CD4-positive, alpha-beta memory T cell (primary cell): ENCODE measurements at regions of chr1 and their contacts with region 1.

Region 1: DNA sequence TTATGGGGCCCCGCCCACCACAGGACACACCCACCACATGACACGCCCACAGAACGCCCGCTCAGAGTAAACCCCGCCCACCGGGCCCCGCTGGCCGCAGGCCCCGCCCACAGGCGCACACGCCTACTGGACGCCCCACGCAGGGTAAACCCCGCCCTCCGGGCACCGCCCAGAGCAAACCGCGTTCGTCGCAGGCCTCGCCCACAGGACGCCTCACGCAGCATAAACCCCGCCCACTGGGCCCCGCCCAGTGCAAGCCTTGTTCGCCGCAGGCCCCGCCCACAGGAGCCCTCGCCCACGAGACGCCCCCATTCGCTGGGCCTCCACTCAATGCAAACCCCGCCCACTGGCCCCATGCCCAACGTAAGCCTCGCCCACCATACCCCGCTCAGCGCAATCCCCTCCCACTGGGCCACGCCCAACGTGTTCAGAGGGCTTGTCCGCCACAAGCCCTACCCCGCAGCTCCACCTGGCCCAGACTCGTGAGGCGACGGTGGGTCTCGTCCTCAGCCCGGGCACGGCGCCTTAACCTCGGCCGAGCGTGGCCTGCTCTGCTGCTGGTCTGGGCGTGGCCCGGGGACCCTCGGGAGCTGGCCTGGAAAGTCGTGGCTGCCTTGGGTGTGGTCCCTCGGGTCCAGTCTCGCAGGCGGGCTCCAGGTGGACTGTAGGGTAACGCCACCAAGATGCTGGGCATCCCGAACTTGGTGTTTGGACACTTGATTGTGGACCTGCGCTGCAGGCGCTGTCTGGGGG is 401 bp upstream of the TMEM52 start:
- DNase-seq: peak; percentile 99 to 100 (median 100)
- H3K4me3 ChIP-seq: peak overlapping the region in 1 of 2 donors; percentile 68
- H3K4me3 Mint-ChIP-seq: peak overlapping the region; percentile 24 to 81 (median 68)
- H3K27ac ChIP-seq: peak overlapping the region; percentile 36
- H3K27ac Mint-ChIP-seq: peak overlapping the region; percentile 78 to 96 (median 88)
- H3K4me1 ChIP-seq: peaks cover 17% of the 10 kb centered on the region
- H3K4me1 Mint-ChIP-seq: peaks cover 1 to 15% (median 6%) of the 10 kb centered on the region in 4 donors
- H3K27me3 ChIP-seq: no peaks in the 10 kb centered on the region
- H3K27me3 Mint-ChIP-seq: peaks cover 0 to 1% of the 10 kb centered on the region in 2 donors

Region 2: GRCh38 chr1:1788646-1789431 is 130.6 kb before region 1 on chr1:
- CTCF ChIA-PET with region 1: no interaction called
- POLR2A ChIA-PET with region 1: no interaction called
- intact Hi-C with region 1: no loop called
- DNase-seq: no peak
- H3K4me3 ChIP-seq: no peak overlapping the region
- H3K4me3 Mint-ChIP-seq: no peak overlapping the region
- H3K27ac ChIP-seq: no peak overlapping the region
- H3K27ac Mint-ChIP-seq: peak overlapping the region in 3 of 7 donors; percentile 22 to 86 (median 65)
- H3K4me1 ChIP-seq: no peaks in the 10 kb centered on the region
- H3K4me1 Mint-ChIP-seq: peaks cover 3 to 16% (median 7%) of the 10 kb centered on the region in 4 donors
- H3K27me3 ChIP-seq: no peaks in the 10 kb centered on the region
- H3K27me3 Mint-ChIP-seq: no peaks in the 10 kb centered on the region

Region 3: GRCh38 chr1:2127187-2128145 is 208.0 kb after region 1 on chr1:
- CTCF ChIA-PET with region 1: no interaction called
- POLR2A ChIA-PET with region 1: no interaction called
- intact Hi-C with region 1: no loop called
- DNase-seq: no peak
- H3K4me3 ChIP-seq: no peak overlapping the region
- H3K4me3 Mint-ChIP-seq: peak overlapping the region in 6 of 8 donors; percentile 65 to 92 (median 86)
- H3K27ac ChIP-seq: no peak overlapping the region
- H3K27ac Mint-ChIP-seq: peak overlapping the region in 6 of 7 donors; percentile 24 to 88 (median 70)
- H3K4me1 ChIP-seq: peaks cover 22% of the 10 kb centered on the region
- H3K4me1 Mint-ChIP-seq: peaks cover 7 to 46% (median 15%) of the 10 kb centered on the region in 4 donors
- H3K27me3 ChIP-seq: no peaks in the 10 kb centered on the region
- H3K27me3 Mint-ChIP-seq: no peaks in the 10 kb centered on the region

Region 4: DNA sequence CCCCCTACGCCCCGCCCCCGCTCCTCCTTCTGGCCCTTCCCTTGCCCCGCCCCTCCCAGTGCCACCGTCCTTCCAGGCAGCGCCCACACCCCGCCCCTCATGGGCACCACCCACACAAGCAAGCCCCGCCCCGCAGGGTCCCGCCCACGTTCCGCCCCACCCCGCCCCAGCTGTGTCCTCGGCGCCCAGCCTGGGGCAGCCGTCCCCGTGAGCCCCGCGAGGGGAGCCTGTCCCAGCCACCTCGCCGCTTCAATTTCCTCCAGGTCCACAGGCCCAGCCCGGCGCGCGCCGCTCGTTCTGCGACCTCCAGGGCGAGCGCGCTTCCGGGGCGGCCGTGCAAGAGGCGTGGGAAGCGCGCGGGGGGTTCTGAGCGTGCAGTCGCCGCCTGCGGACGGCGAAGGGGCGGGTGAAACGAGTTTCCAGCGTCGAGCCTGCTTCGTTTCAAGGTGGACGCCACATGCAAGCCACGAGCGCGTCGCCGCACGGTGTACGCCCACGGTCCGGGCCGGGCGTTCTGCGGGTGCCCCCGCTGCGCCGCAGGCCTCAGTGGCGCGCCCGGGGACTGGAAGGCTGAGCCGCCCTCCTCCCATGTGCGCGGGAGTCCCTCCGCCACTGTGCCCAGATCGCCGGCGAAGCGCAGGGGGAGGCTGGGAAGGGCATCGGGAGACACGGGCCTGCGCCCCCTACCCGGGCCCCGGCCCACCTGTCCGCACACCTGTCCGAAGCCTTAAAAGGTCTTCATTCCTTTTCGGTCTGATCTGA is 285.9 kb after region 1 on chr1:
- CTCF ChIA-PET with region 1: no interaction called
- POLR2A ChIA-PET with region 1: no interaction called
- intact Hi-C with region 1: loop called (anchors 1 kb)
- DNase-seq: peak; percentile 90 to 95 (median 91)
- H3K4me3 ChIP-seq: peak overlapping the region; percentile 6 to 47
- H3K4me3 Mint-ChIP-seq: peak overlapping the region; percentile 48 to 71 (median 68)
- H3K27ac ChIP-seq: peak overlapping the region; percentile 38
- H3K27ac Mint-ChIP-seq: peak overlapping the region in 3 of 7 donors; percentile 35 to 79 (median 62)
- H3K4me1 ChIP-seq: peaks cover 26% of the 10 kb centered on the region
- H3K4me1 Mint-ChIP-seq: peaks cover 0 to 15% (median 3%) of the 10 kb centered on the region in 4 donors
- H3K27me3 ChIP-seq: no peaks in the 10 kb centered on the region
- H3K27me3 Mint-ChIP-seq: no peaks in the 10 kb centered on the region

Region 5: GRCh38 chr1:2242814-2243725 is 323.6 kb after region 1 on chr1:
- CTCF ChIA-PET with region 1: no interaction called
- POLR2A ChIA-PET with region 1: no interaction called
- intact Hi-C with region 1: no loop called
- DNase-seq: peak in 1 of 5 donors; percentile 31
- H3K4me3 ChIP-seq: no peak overlapping the region
- H3K4me3 Mint-ChIP-seq: peak overlapping the region; percentile 7 to 68 (median 35)
- H3K27ac ChIP-seq: no peak overlapping the region
- H3K27ac Mint-ChIP-seq: peak overlapping the region in 5 of 7 donors; percentile 24 to 72 (median 27)
- H3K4me1 ChIP-seq: peaks cover 89% of the 10 kb centered on the region
- H3K4me1 Mint-ChIP-seq: peaks cover 47 to 89% (median 62%) of the 10 kb centered on the region in 4 donors
- H3K27me3 ChIP-seq: no peaks in the 10 kb centered on the region
- H3K27me3 Mint-ChIP-seq: no peaks in the 10 kb centered on the region